MCF 10A (cell line): ENCODE measurements at regions of chrX and their contacts with region 1.

Region 1: DNA sequence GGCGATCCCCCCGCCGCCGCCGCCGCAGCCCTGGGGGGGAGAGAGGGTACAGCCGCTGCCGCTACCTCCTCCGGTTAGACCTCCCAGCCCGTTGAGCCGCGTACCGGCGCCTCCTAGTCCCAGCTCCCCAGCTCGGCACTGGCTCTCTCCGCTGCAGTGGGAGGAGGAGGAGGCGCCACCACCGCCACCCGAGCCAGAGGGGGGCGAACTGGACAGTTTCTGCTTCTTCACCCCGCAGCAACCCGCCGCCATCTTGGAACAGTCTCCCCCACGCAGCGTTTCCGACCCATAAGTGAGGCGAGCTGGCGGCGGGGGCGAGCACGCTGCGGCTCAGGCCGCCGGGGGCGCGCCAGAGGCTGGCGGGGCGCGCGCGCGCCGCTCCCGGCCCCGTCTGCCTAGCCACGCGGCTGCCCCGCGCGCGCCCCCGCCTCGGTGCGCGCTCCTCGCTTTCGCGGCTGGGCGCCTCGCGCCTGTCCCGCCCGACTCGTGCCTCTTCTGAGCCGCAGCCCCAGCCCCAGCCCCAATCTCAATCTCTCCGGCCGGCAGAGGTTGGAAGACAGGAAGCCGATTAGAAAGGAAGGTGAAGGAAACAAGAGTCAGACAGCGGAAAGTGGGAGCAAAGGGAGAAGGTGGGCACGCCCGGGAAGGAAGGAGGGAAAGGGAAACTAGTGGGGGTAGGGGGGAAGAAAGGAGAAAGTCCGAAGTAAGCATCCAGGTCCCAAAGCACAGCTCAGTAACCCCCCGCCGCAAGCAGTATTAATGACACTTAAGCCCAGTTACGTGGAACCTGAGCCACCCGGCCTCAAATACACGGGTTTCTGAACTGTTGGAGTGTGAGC is at the start of gene AMMECR1:
- DNase-seq: peak; percentile 71
- H3K4me3 Mint-ChIP-seq: peak within 1 kb of the TSS; percentile 89
- H3K27ac Mint-ChIP-seq: peak within 1 kb of the TSS; percentile 95
- H3K4me1 Mint-ChIP-seq: peaks cover 6% of the 10 kb centered on the region
- H3K27me3 Mint-ChIP-seq: peaks cover 32% of the 10 kb centered on the region
- CTCF ChIP-seq: no peak
- total RNA-seq, gene AMMECR1: 20.8 and 27.0 TPM in 2 replicates

Region 2: DNA sequence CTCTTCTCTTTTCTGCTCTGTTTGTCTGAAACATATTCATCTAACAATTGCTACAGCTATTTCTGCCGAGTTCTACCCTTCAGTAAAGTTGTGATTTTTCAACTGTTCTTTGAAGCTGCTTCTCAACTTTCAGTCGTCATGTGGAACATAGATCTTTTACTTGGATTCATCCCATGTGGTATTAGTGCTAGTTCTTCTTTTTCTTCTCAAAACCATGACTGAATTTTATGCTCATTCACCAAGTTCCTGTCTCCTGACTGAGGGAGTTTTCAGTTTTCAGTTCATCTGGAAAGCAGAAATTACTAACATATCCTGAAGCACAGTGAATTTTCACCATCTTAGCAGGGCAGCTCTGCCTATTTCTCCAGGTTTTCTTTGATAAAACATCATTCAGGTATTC is 597.1 kb before region 1 on chrX:
- CTCF ChIA-PET with region 1: no interaction called
- POLR2A ChIA-PET with region 1: no interaction called
- intact Hi-C with region 1: no loop called
- DNase-seq: no peak
- H3K4me3 Mint-ChIP-seq: no peak overlapping the region
- H3K27ac Mint-ChIP-seq: no peak overlapping the region
- H3K4me1 Mint-ChIP-seq: peaks cover 5% of the 10 kb centered on the region
- H3K27me3 Mint-ChIP-seq: peaks cover 35% of the 10 kb centered on the region
- CTCF ChIP-seq: no peak

Region 3: DNA sequence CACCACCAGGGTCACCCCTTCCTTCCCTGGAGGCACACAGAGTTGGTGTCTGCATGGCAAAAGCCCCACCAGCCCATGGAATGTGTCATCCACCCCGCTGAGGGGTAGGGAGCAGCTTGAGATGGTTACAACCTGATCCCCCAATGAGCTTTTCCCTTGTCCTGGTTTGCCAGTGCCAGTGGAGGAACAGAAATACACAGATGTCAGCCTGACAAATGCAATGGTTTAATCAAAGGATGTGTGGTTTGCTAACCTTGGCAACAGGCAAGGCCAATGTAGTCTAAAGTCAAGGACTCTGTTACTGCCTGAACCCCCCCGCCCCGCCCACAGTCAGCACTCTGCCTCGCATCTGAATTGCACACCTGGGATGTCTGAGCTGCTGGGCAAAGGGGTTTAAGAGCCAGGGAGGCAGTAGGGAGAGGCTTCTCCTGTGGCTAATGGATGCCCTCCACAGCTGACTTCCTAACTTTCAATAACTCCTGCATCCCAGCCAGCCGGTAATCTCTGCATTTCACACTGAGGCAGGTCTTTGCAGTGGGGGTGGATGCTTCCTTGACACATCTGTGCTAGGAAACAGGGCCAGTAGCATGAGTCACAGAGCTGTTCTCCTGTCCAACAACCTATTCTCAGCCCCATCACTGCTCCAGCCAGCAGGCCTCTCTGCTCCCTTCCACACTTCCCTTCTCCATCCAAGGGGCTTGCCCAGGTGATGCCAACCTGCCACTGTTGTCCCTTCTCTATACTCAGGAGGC is 137.7 kb before region 1 on chrX:
- CTCF ChIA-PET with region 1: interaction called, 3 read pairs
- POLR2A ChIA-PET with region 1: interaction called, 4 read pairs
- intact Hi-C with region 1: loop called (anchors 1 kb)
- DNase-seq: peak; percentile 75
- H3K4me3 Mint-ChIP-seq: no peak overlapping the region
- H3K27ac Mint-ChIP-seq: peak overlapping the region; percentile 47
- H3K4me1 Mint-ChIP-seq: peaks cover 37% of the 10 kb centered on the region
- H3K27me3 Mint-ChIP-seq: peaks cover 78% of the 10 kb centered on the region
- CTCF ChIP-seq: no peak

Region 4: DNA sequence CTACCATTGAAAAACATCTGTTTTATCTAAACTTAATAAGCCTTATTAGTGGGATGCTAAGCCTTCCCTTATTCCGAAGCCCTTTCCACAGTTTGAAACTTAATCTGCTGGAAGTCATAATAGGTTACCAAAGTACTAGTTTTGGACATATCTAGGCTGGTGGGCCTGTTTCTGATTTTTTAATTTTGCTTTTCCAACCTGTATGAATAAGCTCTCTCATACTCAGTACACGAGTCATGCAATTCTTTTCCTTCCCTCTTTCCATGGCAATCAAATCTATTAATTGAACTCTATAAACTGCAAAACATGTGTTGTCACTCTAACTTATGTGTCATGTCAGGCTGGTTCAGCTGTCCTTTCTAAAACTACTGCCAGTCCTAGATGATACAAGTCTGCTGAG is 91.1 kb before region 1 on chrX:
- CTCF ChIA-PET with region 1: no interaction called
- POLR2A ChIA-PET with region 1: interaction called, 14 read pairs
- intact Hi-C with region 1: no loop called
- DNase-seq: no peak
- H3K4me3 Mint-ChIP-seq: no peak overlapping the region
- H3K27ac Mint-ChIP-seq: no peak overlapping the region
- H3K4me1 Mint-ChIP-seq: peaks cover 7% of the 10 kb centered on the region
- H3K27me3 Mint-ChIP-seq: peaks cover 62% of the 10 kb centered on the region
- CTCF ChIP-seq: no peak

Region 5: GRCh38 chrX:110286136-110286535 is 31.9 kb before region 1 on chrX:
- CTCF ChIA-PET with region 1: no interaction called
- POLR2A ChIA-PET with region 1: interaction called, 21 read pairs
- intact Hi-C with region 1: no loop called
- DNase-seq: peak; percentile 77
- H3K4me3 Mint-ChIP-seq: no peak overlapping the region
- H3K27ac Mint-ChIP-seq: peak overlapping the region; percentile 70
- H3K4me1 Mint-ChIP-seq: peaks cover 21% of the 10 kb centered on the region
- H3K27me3 Mint-ChIP-seq: peaks cover 36% of the 10 kb centered on the region
- CTCF ChIP-seq: no peak

Region 6: GRCh38 chrX:110374559-110374958 is 56.5 kb after region 1 on chrX:
- CTCF ChIA-PET with region 1: no interaction called
- POLR2A ChIA-PET with region 1: no interaction called
- intact Hi-C with region 1: no loop called
- DNase-seq: no peak
- H3K4me3 Mint-ChIP-seq: no peak overlapping the region
- H3K27ac Mint-ChIP-seq: no peak overlapping the region
- H3K4me1 Mint-ChIP-seq: no peaks in the 10 kb centered on the region
- H3K27me3 Mint-ChIP-seq: peaks cover 63% of the 10 kb centered on the region
- CTCF ChIP-seq: no peak

Region 7: GRCh38 chrX:110394671-110395070 is 76.6 kb after region 1 on chrX:
- CTCF ChIA-PET with region 1: interaction called, 3 read pairs
- POLR2A ChIA-PET with region 1: interaction called, 18 read pairs
- intact Hi-C with region 1: no loop called
- DNase-seq: peak; percentile 76
- H3K4me3 Mint-ChIP-seq: no peak overlapping the region
- H3K27ac Mint-ChIP-seq: no peak overlapping the region
- H3K4me1 Mint-ChIP-seq: peaks cover 22% of the 10 kb centered on the region
- H3K27me3 Mint-ChIP-seq: peaks cover 74% of the 10 kb centered on the region
- CTCF ChIP-seq: no peak

Region 8: GRCh38 chrX:110407910-110408545 is 90.0 kb after region 1 on chrX:
- CTCF ChIA-PET with region 1: interaction called, 12 read pairs
- POLR2A ChIA-PET with region 1: interaction called, 55 read pairs
- intact Hi-C with region 1: loop called (anchors 2 kb)
- DNase-seq: peak; percentile 85
- H3K4me3 Mint-ChIP-seq: no peak overlapping the region
- H3K27ac Mint-ChIP-seq: no peak overlapping the region
- H3K4me1 Mint-ChIP-seq: peaks cover 12% of the 10 kb centered on the region
- H3K27me3 Mint-ChIP-seq: peaks cover 61% of the 10 kb centered on the region
- CTCF ChIP-seq: peak; percentile 50

Region 9: DNA sequence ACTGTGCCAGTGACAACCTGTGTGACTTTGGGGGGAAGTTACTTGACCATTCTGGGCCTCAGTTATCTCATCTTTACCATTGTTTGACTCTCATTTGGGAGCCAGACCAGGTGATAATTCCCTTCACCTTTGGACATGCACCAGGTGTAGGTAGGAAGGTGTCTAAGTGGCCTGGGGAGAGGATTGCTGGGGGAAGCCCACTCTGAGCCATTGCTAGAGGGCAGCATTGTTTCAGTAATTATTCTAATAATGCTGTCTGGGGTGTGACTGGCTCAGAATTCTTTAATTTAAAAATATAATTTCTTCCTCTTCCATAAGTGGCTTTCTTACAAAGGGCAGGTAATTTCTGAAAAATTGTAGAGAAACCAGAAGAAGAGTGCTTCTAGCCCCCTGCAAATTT is 144.9 kb after region 1 on chrX:
- CTCF ChIA-PET with region 1: no interaction called
- POLR2A ChIA-PET with region 1: no interaction called
- intact Hi-C with region 1: no loop called
- DNase-seq: peak; percentile 6
- H3K4me3 Mint-ChIP-seq: no peak overlapping the region
- H3K27ac Mint-ChIP-seq: no peak overlapping the region
- H3K4me1 Mint-ChIP-seq: no peaks in the 10 kb centered on the region
- H3K27me3 Mint-ChIP-seq: peaks cover 71% of the 10 kb centered on the region
- CTCF ChIP-seq: peak; percentile 30